Right ventricle myocardium superior (tissue), 1 donor: ENCODE measurements at regions of chr22 and their contacts with region 1.

Region 1: GRCh38 chr22:39123751-39124601 is 26.9 kb downstream of the APOBEC3H start:
- DNase-seq: no peak
- ATAC-seq: no peak

Region 2: DNA sequence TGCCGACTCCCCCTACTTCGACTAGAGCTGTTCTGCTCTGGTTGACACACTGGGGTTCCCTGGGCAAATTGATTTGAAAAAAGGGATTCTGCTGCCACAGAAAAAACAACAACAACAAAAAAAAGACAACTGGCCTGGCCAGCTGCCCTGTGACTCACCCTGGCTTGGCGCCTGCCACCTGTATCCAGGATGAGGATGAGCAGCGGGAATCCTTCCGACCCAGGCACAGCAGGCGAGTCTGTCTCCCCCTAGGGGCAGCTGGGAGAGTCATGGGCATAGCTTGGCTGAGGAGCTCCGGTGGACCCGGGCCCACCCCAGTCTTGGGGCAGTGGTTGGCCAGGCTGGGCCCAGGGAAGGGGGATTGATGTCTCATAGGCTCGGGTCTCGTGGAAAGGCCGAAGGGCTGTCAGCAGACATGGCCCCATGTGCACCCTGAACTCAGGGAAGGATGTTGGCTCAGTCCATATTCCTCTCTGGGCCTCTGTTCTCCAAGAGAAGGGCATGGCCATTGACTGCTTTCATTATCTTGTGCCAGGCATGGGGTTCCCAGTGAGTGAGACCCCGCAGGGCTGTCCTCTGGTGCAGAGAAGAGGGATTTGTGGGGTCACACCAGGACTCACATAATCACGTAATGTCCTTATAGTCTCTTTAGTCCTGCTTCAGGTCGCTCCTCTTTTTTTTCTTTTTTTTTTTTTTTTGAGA is 357.7 kb before region 1 on chr22:
- intact Hi-C with region 1: loop called (anchors 10 kb)
- DNase-seq: peak; percentile 63
- ATAC-seq: peak; percentile 49

Region 3: GRCh38 chr22:38872172-38872830 is 251.7 kb before region 1 on chr22 and contains the start of gene CBX6:
- intact Hi-C with region 1: loop called (anchors 5 kb)
- DNase-seq: peak; percentile 98
- ATAC-seq: peak; percentile 91
- total RNA-seq, gene CBX6: 36.1 TPM

Region 4: DNA sequence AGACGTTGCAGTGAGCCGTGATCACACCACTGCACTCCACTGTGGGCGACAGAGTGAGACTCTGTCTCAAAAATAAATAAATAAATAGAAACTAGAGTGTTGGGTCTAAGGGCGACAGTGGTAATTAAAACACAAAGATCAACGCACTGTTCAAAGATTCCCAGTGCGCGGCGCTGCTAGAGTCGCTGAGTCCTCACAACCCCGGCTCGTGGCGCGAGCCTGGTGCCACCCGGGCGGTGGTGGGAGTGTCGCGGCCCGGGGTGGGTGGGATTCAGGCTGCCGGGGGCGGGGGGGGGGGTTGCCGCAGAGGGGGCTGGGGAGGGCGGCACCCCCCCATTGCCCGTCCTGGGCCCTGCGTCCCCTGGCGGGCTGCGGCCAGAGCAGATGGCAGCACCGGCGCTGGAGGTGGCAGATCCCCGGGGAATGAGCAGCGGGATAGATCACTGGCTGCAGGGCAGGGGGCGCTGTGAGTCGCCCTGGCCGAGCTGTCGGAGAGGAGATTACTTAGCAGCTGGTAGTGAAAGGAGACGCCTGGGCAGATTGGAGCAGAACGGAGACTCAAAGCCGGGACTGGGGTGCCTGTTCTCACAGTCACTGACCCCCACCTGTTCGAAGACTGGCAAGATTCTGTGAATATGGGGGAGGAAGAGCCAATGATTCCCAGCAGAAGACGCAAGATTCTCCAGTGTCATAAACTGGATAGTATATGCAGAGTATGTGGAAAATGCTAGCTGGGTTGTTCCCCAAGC is 196.8 kb before region 1 on chr22:
- intact Hi-C with region 1: loop called (anchors 5 kb)
- DNase-seq: peak; percentile 85
- ATAC-seq: peak; percentile 86

Region 5: DNA sequence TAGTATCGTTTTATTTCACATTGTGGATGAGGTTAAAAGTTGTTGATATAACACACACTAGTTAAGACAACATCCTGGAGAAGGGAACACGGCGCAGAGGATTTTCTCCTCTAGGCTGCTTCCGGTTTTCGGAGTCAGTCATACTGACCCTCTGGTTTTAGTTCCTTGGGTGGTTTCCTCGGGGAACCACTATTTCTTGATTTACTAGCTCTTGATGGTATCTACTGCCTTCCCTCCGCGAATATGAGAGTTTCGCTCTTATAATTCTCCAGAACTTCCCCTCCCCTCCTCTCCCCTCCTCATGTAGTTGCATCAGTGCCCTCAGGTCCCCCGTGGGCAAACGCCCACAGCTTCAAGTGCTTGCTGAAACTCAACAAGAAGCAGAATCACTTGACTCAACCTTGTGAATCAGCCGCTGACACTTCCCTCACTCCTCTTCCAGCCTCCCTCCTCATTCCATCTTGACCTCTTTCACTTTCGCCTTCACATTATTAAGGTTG is 182.4 kb before region 1 on chr22:
- intact Hi-C with region 1: no loop called
- DNase-seq: no peak
- ATAC-seq: no peak